Activated T-helper 1 cell treated with anti-CD3 and anti-CD28 coated beads, Interleukin-12 subunit alpha, Interleukin-12 subunit beta, Interleukin-2, Interleukin-4 antibody, amounts not matched to agents 30 ng/mL and 10 ng/mL and 1 ng/mL, durations not matched to agents 14 hours and 24 hours and 36 hours (primary cell): ENCODE measurements at regions of chr1 and their contacts with region 1.

Region 1: DNA sequence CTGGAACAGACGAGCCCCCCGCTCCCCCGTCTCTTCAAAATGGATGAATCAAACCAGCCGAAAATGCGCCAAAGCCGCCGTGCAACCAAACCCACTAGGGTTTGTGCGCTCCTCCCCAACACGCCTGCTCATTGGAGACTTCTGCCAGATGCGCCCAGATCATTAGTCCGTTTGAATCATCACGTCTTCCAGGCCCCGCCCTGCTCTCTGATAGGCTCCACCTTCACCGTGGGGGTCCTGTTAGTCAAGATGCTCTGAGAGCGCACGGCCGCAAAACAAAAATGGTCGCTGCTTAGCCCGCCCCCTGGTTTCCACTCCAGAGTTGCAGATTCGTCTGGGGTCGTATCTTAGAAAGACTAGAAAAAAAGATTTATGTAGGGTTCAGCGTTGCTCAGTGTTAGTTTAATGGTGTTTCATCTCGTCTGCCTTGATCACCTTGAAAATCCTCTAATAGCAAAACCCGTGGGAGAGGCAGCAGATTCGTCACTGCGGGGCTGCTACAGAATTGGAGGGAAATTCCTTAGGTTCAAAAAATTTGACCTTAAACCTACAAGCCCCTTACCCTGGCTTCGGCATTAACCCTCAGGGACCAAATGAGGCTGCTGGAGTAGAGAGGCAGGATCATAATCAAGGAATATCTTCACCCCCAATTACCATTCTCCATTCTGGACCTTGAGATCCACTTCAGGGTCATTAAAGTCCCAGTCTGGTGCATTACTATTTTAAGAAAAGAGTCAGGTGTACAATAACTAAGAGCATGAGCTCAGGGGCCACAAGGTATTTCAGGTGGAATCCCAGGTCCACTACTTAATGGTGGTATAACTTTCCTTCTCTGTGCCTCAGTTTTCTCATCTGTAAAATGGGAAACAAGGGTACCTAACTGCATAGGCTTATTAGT is at the start of gene NUCKS1:
- DNase-seq: peak; percentile 96
- H3K4me3 Mint-ChIP-seq: peak within 1 kb of the TSS; percentile 99
- H3K27ac Mint-ChIP-seq: peak within 1 kb of the TSS; percentile 97
- H3K4me1 Mint-ChIP-seq: peaks cover 46% of the 10 kb centered on the region
- H3K27me3 Mint-ChIP-seq: no peaks in the 10 kb centered on the region
- total RNA-seq, gene NUCKS1: 146 and 147 TPM in 2 replicates

Region 2: GRCh38 chr1:205284343-205285144 is 465.8 kb before region 1 on chr1:
- intact Hi-C with region 1: loop called (anchors 10 kb)
- DNase-seq: peak; percentile 84
- H3K4me3 Mint-ChIP-seq: peak overlapping the region; percentile 64
- H3K27ac Mint-ChIP-seq: peak overlapping the region; percentile 90
- H3K4me1 Mint-ChIP-seq: peaks cover 75% of the 10 kb centered on the region
- H3K27me3 Mint-ChIP-seq: peaks cover 9% of the 10 kb centered on the region

Region 3: GRCh38 chr1:205711104-205712020 is 39.0 kb before region 1 on chr1:
- intact Hi-C with region 1: loop called (anchors 2 kb)
- DNase-seq: peak; percentile 42
- H3K4me3 Mint-ChIP-seq: no peak overlapping the region
- H3K27ac Mint-ChIP-seq: peak overlapping the region; percentile 56
- H3K4me1 Mint-ChIP-seq: peaks cover 16% of the 10 kb centered on the region
- H3K27me3 Mint-ChIP-seq: no peaks in the 10 kb centered on the region

Region 4: DNA sequence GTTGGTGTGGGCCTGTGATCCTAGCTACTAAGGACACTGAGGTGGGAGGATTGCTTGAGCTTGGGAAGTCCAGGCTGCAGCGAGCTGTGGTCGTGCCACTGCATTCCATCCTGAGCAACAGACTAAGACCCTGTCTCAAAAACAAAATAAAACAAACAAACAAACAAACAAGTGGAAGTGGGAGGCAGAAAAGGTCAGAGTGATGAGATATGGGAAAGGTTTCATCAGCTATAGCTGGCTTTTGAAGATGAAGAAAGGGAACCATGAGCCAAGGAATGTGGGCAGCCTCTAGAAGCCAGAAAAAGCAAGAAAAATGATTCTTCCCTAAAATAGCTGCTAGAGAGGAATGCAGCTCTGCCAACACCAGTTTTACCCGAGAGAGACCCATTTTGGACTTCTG is 10.2 kb after region 1 on chr1:
- intact Hi-C with region 1: loop called (anchors 1 kb)
- DNase-seq: no peak
- H3K4me3 Mint-ChIP-seq: no peak overlapping the region
- H3K27ac Mint-ChIP-seq: no peak overlapping the region
- H3K4me1 Mint-ChIP-seq: peaks cover 11% of the 10 kb centered on the region
- H3K27me3 Mint-ChIP-seq: no peaks in the 10 kb centered on the region

Region 5: GRCh38 chr1:205812878-205813754 is 62.7 kb after region 1 on chr1 and contains the start of gene SLC41A1:
- intact Hi-C with region 1: loop called (anchors 1 kb)
- DNase-seq: peak; percentile 81
- H3K4me3 Mint-ChIP-seq: peak within 1 kb of the TSS; percentile 94
- H3K27ac Mint-ChIP-seq: peak within 1 kb of the TSS; percentile 85
- H3K4me1 Mint-ChIP-seq: peaks cover 49% of the 10 kb centered on the region
- H3K27me3 Mint-ChIP-seq: peaks cover 7% of the 10 kb centered on the region
- total RNA-seq, gene SLC41A1: 33.9 and 34.8 TPM in 2 replicates

Region 6: GRCh38 chr1:206563367-206564207 is 813.2 kb after region 1 on chr1:
- intact Hi-C with region 1: loop called (anchors 10 kb)
- DNase-seq: no peak
- H3K4me3 Mint-ChIP-seq: peak overlapping the region; percentile 78
- H3K27ac Mint-ChIP-seq: peak overlapping the region; percentile 91
- H3K4me1 Mint-ChIP-seq: peaks cover 93% of the 10 kb centered on the region
- H3K27me3 Mint-ChIP-seq: peaks cover 2% of the 10 kb centered on the region